Naive thymus-derived CD4-positive, alpha-beta T cell (primary cell): ENCODE measurements at regions of chr16 and their contacts with region 1.

Region 1: DNA sequence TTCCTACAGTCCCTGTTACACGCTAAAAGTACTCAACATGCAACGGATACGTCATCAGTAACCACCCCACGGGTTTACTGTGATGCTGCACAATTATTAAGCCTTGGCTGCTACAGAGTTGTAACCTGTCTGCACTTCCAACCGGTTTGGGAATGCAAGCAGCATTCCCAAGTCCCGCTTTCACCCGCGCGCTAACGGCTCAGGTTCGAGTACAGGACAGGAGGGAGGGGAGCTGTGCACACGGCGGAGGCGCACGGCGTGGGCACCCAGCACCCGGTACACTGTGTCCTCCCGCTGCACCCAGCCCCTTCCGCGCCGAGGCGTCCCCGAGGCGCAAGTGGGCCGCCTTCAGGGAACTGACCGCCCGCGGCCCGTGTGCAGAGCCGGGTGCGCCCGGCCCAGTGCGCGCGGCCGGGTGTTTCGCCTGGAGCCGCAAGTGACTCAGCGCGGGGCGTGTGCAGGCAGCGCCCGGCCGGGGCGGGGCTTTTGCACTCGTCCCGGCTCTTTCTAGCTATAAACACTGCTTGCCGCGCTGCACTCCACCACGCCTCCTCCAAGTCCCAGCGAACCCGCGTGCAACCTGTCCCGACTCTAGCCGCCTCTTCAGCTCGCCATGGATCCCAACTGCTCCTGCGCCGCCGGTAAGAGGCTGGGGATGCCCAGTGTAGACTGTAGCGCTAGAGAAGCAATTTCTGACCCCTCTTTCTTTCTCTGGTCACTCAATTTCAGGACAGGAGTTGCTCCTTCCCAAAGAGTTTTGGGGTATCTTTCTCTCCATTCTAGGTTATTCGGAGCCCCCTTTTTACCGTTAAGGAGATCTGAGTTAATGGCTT is at the start of gene MT2A:
- DNase-seq: peak; percentile 70 to 89 (median 84)
- ATAC-seq: peak; percentile 88
- H3K4me3 ChIP-seq: peak within 1 kb of the TSS; percentile 97
- H3K4me3 Mint-ChIP-seq: peak within 1 kb of the TSS; percentile 85 to 100 (median 96)
- H3K27ac ChIP-seq: peak within 1 kb of the TSS; percentile 94
- H3K27ac Mint-ChIP-seq: peak within 1 kb of the TSS; percentile 85 to 99 (median 93)
- H3K4me1 ChIP-seq: peaks cover 29 to 34% of the 10 kb centered on the region in 2 donors
- H3K4me1 Mint-ChIP-seq: peaks cover 35 to 52% (median 47%) of the 10 kb centered on the region in 7 donors
- H3K27me3 ChIP-seq: no peaks in the 10 kb centered on the region
- H3K27me3 Mint-ChIP-seq: no peaks in the 10 kb centered on the region
- total RNA-seq, gene MT2A: 15.0 to 435 (median 32.8) TPM

Region 2: DNA sequence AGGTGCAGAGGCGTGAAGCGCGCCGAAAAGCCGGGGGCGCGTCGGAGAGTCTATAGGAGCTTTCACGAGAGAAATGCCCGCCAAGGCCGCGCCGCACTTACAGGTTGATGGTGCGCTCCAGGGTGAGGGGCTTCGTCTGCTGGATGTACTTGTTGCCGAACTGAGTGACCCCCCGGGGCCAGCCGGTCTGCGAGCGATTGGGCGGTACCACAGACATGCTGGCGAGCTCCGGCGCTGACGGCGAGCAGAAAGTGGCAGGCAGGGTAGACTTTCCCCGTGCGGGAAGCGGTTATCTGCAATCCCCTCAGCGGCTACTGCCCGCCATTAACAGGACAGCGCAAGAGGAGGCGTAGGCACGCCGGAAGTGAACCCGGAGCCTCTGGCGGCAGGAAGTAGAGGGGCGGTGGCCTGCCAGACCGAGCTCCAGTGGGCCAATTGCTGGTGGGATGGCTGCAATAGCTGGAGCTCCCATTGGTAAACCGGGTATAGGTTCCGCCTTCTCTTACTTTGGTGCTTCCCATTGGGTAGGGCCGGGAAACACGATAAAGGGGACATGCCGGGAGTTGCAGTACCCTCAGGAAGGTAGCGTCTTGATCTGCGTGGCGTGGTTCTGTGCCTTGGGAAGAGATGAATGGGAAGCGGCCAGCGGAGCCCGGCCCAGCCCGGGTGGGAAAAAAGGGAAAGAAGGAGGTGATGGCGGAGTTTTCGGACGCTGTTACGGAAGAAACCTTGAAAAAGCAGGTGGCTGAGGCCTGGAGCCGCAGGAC is 157.1 kb before region 1 on chr16 and contains the starts of genes NUDT21 and OGFOD1:
- CTCF ChIA-PET with region 1: no interaction called
- POLR2A ChIA-PET with region 1: no interaction called
- intact Hi-C with region 1: loop called in 1 of 2 experiments (anchors 1 kb)
- DNase-seq: peak; percentile 67 to 96 (median 93)
- ATAC-seq: peak; percentile 99
- H3K4me3 ChIP-seq: peak within 1 kb of the TSS; percentile 96
- H3K4me3 Mint-ChIP-seq: peak within 1 kb of the TSS; percentile 94 to 100 (median 97)
- H3K27ac ChIP-seq: peak within 1 kb of the TSS; percentile 92
- H3K27ac Mint-ChIP-seq: peak within 1 kb of the TSS; percentile 92 to 98 (median 93)
- H3K4me1 ChIP-seq: peaks cover 24 to 42% of the 10 kb centered on the region in 2 donors
- H3K4me1 Mint-ChIP-seq: peaks cover 50 to 77% (median 64%) of the 10 kb centered on the region in 7 donors
- H3K27me3 ChIP-seq: no peaks in the 10 kb centered on the region
- H3K27me3 Mint-ChIP-seq: no peaks in the 10 kb centered on the region
- total RNA-seq, gene NUDT21: 74.0 to 191 (median 97.5) TPM
- total RNA-seq, gene OGFOD1: 23.8 to 51.8 (median 42.1) TPM

Region 3: DNA sequence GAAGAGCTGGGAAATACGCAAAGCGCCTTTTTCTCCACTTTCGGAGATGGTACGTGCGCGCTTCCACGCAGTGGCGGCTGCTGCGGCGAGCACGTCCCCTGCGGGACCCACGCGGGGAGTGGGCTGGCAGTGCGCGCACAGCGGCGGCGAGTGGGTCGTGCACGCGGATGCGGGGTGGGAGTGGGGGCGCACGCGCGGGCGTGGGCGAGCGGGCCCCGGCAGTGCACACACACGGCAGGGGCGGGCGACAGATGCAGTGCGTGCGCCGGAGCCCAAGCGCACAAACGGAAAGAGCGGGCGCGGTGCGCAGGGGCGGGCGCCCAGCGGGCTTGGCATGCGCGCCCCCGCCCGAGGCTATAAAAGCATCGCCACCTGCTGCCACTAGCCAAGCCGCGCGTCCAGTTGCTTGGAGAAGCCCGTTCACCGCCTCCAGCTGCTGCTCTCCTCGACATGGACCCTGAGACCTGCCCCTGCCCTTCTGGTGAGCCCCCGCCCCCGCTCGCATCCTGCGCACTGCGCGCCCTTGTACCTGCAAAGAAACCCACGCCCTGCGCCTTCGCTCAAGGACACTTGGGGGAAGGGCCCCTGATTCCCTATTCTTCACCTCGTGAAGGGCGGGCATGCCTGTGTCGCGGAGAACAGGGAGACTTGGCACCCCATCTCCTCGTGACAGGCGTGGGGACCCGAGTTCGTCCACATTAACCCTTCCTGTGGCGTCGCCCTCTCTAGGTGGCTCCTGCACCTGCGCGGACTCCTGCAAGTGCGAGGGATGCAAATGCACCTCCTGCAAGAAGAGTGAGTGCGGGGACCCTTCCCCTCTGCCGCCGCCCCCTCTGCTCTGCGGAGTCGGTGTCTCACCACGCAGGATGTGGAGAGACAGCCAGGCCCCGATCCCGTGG is 18.9 kb before region 1 on chr16 and contains the start of gene MT3:
- CTCF ChIA-PET with region 1: interaction called, 4 read pairs
- POLR2A ChIA-PET with region 1: interaction called, 3 read pairs
- intact Hi-C with region 1: loop called (anchors 2 kb)
- DNase-seq: peak in 8 of 9 donors; percentile 21 to 54 (median 42)
- ATAC-seq: peak; percentile 77
- H3K4me3 ChIP-seq: peak within 1 kb of the TSS; percentile 61
- H3K4me3 Mint-ChIP-seq: peak within 1 kb of the TSS; percentile 77 to 90 (median 86)
- H3K27ac ChIP-seq: no peak within 1 kb of the TSS
- H3K27ac Mint-ChIP-seq: peak within 1 kb of the TSS in 3 of 9 donors; percentile 13 to 87 (median 38)
- H3K4me1 ChIP-seq: peaks cover 4 to 6% of the 10 kb centered on the region in 2 donors
- H3K4me1 Mint-ChIP-seq: peaks cover 6 to 15% (median 11%) of the 10 kb centered on the region in 7 donors
- H3K27me3 ChIP-seq: no peaks in the 10 kb centered on the region
- H3K27me3 Mint-ChIP-seq: peaks cover 9 to 47% (median 18%) of the 10 kb centered on the region in 5 donors
- total RNA-seq, gene MT3: 0.76 to 4.0 (median 1.5) TPM in 3 of 5 experiments, not detected in the others

Region 4: GRCh38 chr16:56643080-56643778 is 35.0 kb after region 1 on chr16:
- CTCF ChIA-PET with region 1: interaction called, 10 read pairs
- POLR2A ChIA-PET with region 1: interaction called, 9 read pairs
- intact Hi-C with region 1: loop called (anchors 1 kb)
- DNase-seq: peak; percentile 42 to 79 (median 57)
- ATAC-seq: peak; percentile 99
- H3K4me3 ChIP-seq: peak overlapping the region; percentile 48
- H3K4me3 Mint-ChIP-seq: peak overlapping the region; percentile 60 to 84 (median 80)
- H3K27ac ChIP-seq: peak overlapping the region; percentile 40
- H3K27ac Mint-ChIP-seq: peak overlapping the region in 5 of 9 donors; percentile 37 to 67 (median 54)
- H3K4me1 ChIP-seq: peaks cover 11 to 16% of the 10 kb centered on the region in 2 donors
- H3K4me1 Mint-ChIP-seq: peaks cover 15 to 31% (median 25%) of the 10 kb centered on the region in 7 donors
- H3K27me3 ChIP-seq: peaks cover 0 to 4% of the 10 kb centered on the region in 2 donors
- H3K27me3 Mint-ChIP-seq: peaks cover 28 to 84% (median 34%) of the 10 kb centered on the region in 5 donors

Region 5: DNA sequence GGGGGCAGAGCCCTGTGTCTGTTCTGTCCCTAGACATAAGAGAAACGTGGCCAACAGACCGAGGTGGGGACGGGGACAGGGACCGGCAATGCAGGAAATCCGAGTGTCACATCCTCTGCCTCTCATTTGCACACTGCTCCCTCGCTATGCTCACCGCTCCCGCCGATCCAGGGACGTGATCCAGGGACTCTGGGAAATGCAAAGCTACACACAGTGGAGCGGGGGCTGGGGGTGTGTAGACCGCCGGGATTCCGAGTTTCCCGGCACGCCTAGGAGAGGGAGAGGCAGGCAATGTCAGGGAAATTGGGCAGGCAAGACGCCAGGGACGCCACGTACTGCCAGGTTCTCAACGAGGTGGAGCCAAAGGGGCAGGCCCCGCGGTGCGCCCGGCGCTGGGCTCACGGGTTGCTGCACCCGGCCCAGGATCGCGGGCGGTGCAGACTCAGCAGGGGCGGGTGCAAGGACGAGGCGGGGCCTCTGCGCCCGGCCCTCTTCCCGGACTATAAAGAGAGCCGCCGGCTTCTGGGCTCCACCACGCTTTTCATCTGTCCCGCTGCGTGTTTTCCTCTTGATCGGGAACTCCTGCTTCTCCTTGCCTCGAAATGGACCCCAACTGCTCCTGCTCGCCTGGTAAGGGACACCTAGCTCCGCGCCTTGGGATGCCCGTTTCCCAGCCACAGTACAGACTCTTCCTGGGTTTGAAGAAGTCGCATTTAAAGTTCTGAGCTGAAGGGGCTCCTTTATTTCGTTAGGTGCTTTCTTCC is 73.9 kb after region 1 on chr16 and contains the start of gene MT1X:
- CTCF ChIA-PET with region 1: no interaction called
- POLR2A ChIA-PET with region 1: interaction called, 12 read pairs
- intact Hi-C with region 1: loop called (anchors 1 kb)
- DNase-seq: peak; percentile 77 to 94 (median 88)
- ATAC-seq: peak; percentile 100
- H3K4me3 ChIP-seq: peak within 1 kb of the TSS; percentile 93
- H3K4me3 Mint-ChIP-seq: peak within 1 kb of the TSS; percentile 86 to 99 (median 96)
- H3K27ac ChIP-seq: peak within 1 kb of the TSS; percentile 81
- H3K27ac Mint-ChIP-seq: peak within 1 kb of the TSS; percentile 89 to 99 (median 95)
- H3K4me1 ChIP-seq: peaks cover 13 to 15% of the 10 kb centered on the region in 2 donors
- H3K4me1 Mint-ChIP-seq: peaks cover 0 to 28% (median 25%) of the 10 kb centered on the region in 7 donors
- H3K27me3 ChIP-seq: no peaks in the 10 kb centered on the region
- H3K27me3 Mint-ChIP-seq: peaks cover 0 to 2% (median 0%) of the 10 kb centered on the region in 5 donors
- total RNA-seq, gene MT1X: 15.0 to 70.7 (median 25.9) TPM

Region 6: DNA sequence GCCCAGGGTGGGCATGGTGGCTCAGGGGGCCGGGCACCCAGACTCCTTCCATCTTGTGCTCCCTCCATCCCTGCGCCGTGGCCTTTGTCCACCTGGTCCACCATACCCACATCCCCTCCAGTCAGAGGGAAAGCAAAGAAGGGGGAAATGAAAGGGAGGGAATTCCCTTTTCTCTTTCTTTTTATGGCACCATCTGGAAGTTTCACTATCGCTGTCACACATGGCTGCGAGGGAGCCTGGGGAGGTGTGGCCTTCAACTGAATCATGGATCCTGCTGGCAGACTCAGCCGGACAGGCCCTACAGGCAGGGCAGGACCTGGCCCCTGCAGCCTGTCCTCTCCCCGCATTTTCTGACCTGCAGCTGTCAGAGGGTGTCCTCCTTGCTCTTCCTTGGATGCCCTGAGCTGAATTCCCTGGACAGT is 262.9 kb after region 1 on chr16:
- CTCF ChIA-PET with region 1: no interaction called
- POLR2A ChIA-PET with region 1: no interaction called
- intact Hi-C with region 1: no loop called
- DNase-seq: no peak
- ATAC-seq: no peak
- H3K4me3 ChIP-seq: no peak overlapping the region
- H3K4me3 Mint-ChIP-seq: no peak overlapping the region
- H3K27ac ChIP-seq: no peak overlapping the region
- H3K27ac Mint-ChIP-seq: no peak overlapping the region
- H3K4me1 ChIP-seq: no peaks in the 10 kb centered on the region
- H3K4me1 Mint-ChIP-seq: peaks cover 0 to 9% (median 6%) of the 10 kb centered on the region in 7 donors
- H3K27me3 ChIP-seq: no peaks in the 10 kb centered on the region
- H3K27me3 Mint-ChIP-seq: no peaks in the 10 kb centered on the region

Region 7: GRCh38 chr16:56988948-56989945 is 381.0 kb after region 1 on chr16 and contains the start of gene NLRC5:
- CTCF ChIA-PET with region 1: no interaction called
- POLR2A ChIA-PET with region 1: no interaction called
- intact Hi-C with region 1: loop called in 1 of 2 experiments (anchors 1 kb)
- DNase-seq: peak; percentile 72 to 93 (median 88)
- ATAC-seq: peak; percentile 95
- H3K4me3 ChIP-seq: peak within 1 kb of the TSS; percentile 73
- H3K4me3 Mint-ChIP-seq: peak within 1 kb of the TSS; percentile 93 to 100 (median 98)
- H3K27ac ChIP-seq: peak within 1 kb of the TSS; percentile 98
- H3K27ac Mint-ChIP-seq: peak within 1 kb of the TSS; percentile 85 to 99 (median 97)
- H3K4me1 ChIP-seq: peaks cover 24 to 51% of the 10 kb centered on the region in 2 donors
- H3K4me1 Mint-ChIP-seq: peaks cover 65 to 87% (median 73%) of the 10 kb centered on the region in 7 donors
- H3K27me3 ChIP-seq: no peaks in the 10 kb centered on the region
- H3K27me3 Mint-ChIP-seq: no peaks in the 10 kb centered on the region
- total RNA-seq, gene NLRC5: 380 to 615 (median 394) TPM